CD8-positive, alpha-beta T cell (primary cell): ENCODE measurements at regions of chr10 and their contacts with region 1.

Region 1: GRCh38 chr10:80444646-80445319 is 9.3 kb upstream of the TSPAN14 start:
- DNase-seq: peak in 8 of 9 experiments; percentile 41 to 87 (median 65)
- ATAC-seq: peak; percentile 86
- H3K4me3 ChIP-seq: no peak overlapping the region
- H3K4me3 Mint-ChIP-seq: no peak overlapping the region
- H3K27ac ChIP-seq: no peak overlapping the region
- H3K27ac Mint-ChIP-seq: peak overlapping the region; percentile 79
- H3K4me1 ChIP-seq: peaks cover 42% of the 10 kb centered on the region
- H3K4me1 Mint-ChIP-seq: peaks cover 51% of the 10 kb centered on the region
- H3K27me3 ChIP-seq: no peaks in the 10 kb centered on the region
- H3K27me3 Mint-ChIP-seq: no peaks in the 10 kb centered on the region
- CTCF ChIP-seq: peak; percentile 42

Region 2: DNA sequence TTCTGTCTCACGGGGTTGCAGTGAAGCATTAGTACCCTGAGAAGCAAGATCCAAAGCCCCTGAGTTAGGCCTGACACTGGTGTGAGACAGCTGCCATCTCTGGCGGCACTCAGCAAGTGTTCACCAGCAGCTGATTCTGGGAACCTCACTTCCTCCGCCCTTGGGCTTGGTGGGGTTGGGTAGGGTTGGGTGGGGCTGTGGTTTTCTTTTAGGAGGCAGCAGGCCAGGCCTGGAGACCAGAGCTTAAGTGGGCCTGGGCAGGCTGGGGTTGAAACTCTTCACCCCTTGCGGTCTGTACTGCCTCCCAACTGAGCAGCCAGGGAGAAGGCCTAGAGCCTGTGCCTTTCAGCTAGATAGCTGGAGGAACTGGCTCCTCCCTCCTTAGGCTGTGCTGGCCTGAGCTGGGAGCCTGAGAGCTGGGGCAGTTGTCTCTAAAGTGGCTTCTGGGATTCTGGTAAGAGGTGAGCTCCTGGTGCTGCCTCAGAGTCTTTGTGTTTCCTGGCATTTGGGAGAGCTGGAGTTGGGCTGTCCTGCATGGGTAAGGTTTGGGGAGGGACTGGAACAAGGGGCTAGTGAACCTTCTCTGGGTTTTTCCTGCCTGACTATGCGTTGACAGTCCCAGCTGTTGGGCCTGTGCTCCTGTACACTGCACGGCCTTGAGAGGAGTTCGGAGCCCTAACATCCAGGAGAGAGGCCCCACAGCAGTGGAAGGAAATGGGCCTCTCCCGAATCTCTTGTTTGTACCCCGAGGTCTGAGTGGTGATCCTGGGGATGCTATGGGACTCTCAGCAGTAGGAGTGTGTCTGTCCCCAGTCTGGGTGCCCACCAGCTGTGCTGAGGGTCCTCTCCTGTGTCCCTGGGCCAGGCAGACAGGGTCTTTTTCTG is 14.5 kb after region 1 on chr10:
- CTCF ChIA-PET with region 1: interaction called, 312 read pairs
- POLR2A ChIA-PET with region 1: interaction called, 6 read pairs
- intact Hi-C with region 1: no loop called
- DNase-seq: peak in 8 of 9 experiments; percentile 54 to 87 (median 75)
- ATAC-seq: peak; percentile 57
- H3K4me3 ChIP-seq: peak overlapping the region; percentile 44 to 51
- H3K4me3 Mint-ChIP-seq: peak overlapping the region; percentile 99
- H3K27ac ChIP-seq: peak overlapping the region; percentile 39 to 71
- H3K27ac Mint-ChIP-seq: peak overlapping the region; percentile 98
- H3K4me1 ChIP-seq: peaks cover 85% of the 10 kb centered on the region
- H3K4me1 Mint-ChIP-seq: peaks cover 84% of the 10 kb centered on the region
- H3K27me3 ChIP-seq: no peaks in the 10 kb centered on the region
- H3K27me3 Mint-ChIP-seq: no peaks in the 10 kb centered on the region
- CTCF ChIP-seq: no peak

Region 3: GRCh38 chr10:80477813-80478212 is 33.0 kb after region 1 on chr10:
- CTCF ChIA-PET with region 1: interaction called, 312 read pairs
- POLR2A ChIA-PET with region 1: no interaction called
- intact Hi-C with region 1: no loop called
- DNase-seq: peak in 1 of 9 experiments; percentile 21
- ATAC-seq: no peak
- H3K4me3 ChIP-seq: no peak overlapping the region
- H3K4me3 Mint-ChIP-seq: no peak overlapping the region
- H3K27ac ChIP-seq: peak overlapping the region in 1 of 2 experiments; percentile 39
- H3K27ac Mint-ChIP-seq: peak overlapping the region; percentile 82
- H3K4me1 ChIP-seq: peaks cover 61% of the 10 kb centered on the region
- H3K4me1 Mint-ChIP-seq: peaks cover 79% of the 10 kb centered on the region
- H3K27me3 ChIP-seq: no peaks in the 10 kb centered on the region
- H3K27me3 Mint-ChIP-seq: no peaks in the 10 kb centered on the region
- CTCF ChIP-seq: no peak

Region 4: DNA sequence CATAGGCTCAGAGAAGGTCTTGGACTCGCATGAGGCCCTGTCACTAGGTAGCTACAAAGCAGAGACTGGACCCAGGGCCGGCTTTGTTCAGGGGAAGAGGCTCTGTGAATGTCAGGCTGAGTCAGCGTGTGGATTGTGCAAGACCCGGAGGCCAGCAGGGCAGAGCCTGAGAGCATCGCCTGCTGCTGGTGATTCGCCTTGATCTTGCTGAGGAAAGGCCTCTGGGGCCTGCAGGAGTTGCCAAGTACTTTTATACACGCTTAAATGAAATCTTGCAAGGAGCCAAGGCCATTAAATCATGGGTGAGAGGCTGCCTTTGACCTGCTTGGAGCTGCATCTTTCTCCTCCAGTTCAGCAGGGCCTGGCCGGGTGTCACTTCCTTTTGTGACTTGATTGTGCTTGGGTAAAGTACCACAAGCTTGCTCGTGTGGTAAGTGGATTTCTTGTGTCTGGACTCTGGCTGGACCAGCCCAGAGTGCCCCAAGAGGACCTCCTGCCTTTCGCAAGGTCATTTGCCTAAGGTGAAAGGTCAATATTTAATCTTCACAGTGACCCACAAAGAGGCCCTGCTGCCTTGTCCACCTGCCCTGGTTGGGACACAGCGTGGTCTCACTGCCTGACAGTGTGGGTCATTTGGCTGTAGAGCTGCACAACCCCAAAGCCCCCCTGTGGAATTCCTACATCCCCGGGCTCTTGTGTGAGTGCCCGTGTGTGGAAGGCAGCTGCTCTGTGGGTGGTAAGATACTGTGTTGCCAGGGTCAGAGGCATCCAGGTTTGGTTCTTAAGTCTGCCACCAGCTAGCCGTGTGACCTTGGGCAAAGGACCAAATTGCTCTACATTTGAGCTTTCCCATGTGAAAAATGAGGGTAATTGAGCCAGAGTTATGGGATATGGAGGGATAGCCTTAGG is 54.3 kb after region 1 on chr10:
- CTCF ChIA-PET with region 1: interaction called, 562 read pairs
- POLR2A ChIA-PET with region 1: interaction called, 31 read pairs
- intact Hi-C with region 1: no loop called
- DNase-seq: peak in 7 of 9 experiments; percentile 27 to 66 (median 55)
- ATAC-seq: peak; percentile 39
- H3K4me3 ChIP-seq: peak overlapping the region; percentile 12 to 29
- H3K4me3 Mint-ChIP-seq: peak overlapping the region; percentile 74
- H3K27ac ChIP-seq: peak overlapping the region; percentile 11 to 84
- H3K27ac Mint-ChIP-seq: peak overlapping the region; percentile 96
- H3K4me1 ChIP-seq: peaks cover 98% of the 10 kb centered on the region
- H3K4me1 Mint-ChIP-seq: peaks cover 97% of the 10 kb centered on the region
- H3K27me3 ChIP-seq: no peaks in the 10 kb centered on the region
- H3K27me3 Mint-ChIP-seq: no peaks in the 10 kb centered on the region
- CTCF ChIP-seq: no peak